ENCODE measurements at regions of chr4 and their contacts with region 1.

Region 1: DNA sequence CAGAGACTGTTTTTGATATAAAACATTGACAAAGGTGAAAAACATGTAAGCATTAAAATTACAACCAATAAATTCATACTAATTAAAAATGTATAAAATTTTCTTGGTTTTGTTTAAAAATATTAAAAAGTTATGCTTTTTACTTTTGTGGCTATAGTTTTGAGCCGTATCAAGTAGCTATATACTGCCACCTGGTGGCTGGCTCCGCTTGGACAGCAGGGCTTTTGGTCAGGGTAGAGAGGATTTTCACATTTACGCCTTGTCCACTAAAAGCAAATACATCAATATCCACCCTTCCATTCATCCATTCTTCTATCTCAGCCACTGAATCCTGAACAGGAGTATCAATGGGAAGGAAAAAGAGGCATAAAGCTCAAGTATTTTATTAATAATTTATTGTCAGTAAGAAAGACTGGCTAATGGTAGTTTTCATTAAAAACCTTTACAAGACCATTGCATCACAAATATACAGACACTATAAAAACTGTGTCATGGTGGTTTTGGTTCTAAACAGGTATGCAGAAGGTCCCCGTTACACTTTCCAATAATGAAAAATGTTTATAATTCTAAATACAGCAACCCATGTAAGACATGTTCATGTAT is 32.1 kb upstream of the MTNR1A start:
- DNase-seq: peak; percentile 81
- ATAC-seq: peak; percentile 53 to 62

Region 2: GRCh38 chr4:186144956-186145569 is 442.5 kb before region 1 on chr4:
- intact Hi-C with region 1: loop called in 1 of 2 experiments (anchors 10 kb)
- DNase-seq: peak; percentile 65
- ATAC-seq: peak; percentile 66 to 77

Region 3: DNA sequence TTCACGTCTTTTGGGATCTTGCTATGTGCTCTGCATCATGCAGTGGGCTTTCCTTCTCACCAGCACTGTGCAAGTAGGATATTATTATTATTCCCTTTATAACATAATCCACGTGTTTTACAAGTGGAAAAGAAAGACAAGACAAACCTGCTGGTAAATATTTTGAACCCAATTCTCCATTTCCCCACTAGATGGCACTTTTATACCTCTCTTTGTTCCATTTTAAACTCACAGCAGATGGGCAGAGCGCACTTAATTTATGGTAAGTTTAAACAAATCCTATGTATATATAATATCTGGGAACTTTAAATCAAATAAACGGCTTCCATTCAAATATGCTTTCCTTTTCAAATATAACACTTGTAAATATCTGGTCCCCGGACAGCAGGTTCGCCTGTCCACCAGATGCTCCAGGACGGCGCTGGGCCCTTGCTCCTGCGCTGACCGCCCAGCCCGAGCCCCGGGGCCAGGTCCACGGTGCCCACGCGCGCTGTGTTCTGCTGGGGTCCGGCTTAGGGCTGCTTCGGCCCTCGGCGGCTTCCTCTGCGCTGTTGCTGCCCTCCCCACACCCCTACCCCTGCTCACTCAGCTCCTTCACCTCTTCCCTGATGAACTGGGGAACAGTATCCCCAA is 290.4 kb before region 1 on chr4:
- intact Hi-C with region 1: loop called (anchors 2 to 10 kb)
- DNase-seq: no peak
- ATAC-seq: no peak

Region 4: GRCh38 chr4:186472948-186473347 is 114.6 kb before region 1 on chr4:
- intact Hi-C with region 1: loop called (anchors 5 to 10 kb)
- DNase-seq: no peak
- ATAC-seq: no peak

Region 5: DNA sequence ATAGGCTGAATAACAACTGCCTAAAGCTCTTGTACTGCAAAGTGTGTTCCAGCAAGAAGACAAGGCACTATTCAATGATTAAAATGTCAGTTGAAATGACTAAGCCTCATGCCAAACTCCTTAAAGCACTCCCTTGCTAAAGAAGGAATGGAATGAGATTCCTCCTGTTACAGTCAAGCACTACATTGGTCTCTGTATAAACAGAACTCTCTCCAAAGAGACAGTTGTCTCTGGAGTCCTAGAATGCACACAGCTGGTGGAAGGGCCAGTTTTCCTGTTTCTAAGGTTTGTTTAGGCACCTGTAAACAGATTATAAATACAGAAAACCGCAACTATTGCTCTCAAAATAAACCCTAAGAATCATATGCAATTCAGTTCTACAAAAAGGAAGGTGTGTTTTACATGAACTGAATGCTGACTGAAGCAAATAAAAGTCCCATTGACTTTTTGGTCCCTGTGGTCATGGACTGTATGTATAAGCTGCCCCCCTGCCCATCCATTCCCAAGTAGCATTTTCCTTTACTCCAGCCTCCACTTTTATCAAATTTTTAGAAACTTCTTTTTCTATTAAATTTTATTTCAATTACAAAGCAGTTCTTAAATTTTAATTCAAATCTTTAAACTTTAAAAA is 89.1 kb after region 1 on chr4:
- intact Hi-C with region 1: no loop called
- DNase-seq: no peak
- ATAC-seq: peak; percentile 83 to 96